ENCODE measurements at regions of chr6 and their contacts with region 1.

Region 1: DNA sequence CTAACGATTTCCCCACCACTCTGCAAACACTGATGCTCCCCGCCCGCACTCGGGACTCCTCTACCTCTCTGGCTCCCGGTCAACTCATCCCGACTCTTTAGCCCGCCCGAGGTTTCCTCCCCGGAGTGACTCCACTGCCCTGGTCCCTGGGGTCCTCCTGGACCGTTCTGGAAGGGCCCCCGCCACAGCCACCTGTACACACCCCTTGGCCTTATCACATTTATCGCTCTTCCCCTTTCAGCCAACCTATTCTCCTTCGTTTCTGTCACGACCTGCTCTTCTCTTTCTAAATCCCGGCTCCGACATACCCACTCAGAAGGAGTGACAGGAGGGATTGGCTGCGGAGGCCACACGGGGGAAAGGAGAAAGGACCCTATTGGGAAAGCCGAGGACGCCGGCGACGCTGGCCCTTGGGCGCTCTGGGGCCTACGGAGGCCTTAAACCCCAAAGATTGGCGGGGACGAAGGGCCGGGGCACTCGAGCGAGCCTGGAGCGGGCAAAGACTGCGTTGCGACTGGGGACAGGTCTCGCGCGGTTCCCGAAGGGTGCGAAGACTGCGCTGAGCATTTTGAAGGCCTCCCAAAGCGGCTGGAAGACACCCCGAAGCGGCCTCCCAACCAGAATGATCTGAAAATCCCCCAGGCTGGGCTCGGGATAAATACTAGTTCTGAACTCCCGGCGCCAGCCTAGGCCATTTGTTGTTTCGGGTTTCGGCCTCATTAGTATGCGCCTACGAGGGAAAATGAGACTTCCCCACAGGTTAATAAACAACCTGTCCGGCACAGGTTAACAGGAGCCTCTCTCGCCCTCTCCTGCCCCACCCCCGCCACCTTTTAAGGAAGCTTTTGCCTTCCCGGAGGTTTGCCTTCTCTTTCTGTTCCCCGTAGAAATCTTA is 9.2 kb downstream of the SIM1 start:
- DNase-seq: no peak
- H3K4me3 ChIP-seq: no peak overlapping the region
- H3K27ac ChIP-seq: no peak overlapping the region
- H3K4me1 ChIP-seq: peaks cover 8% of the 10 kb centered on the region
- H3K27me3 ChIP-seq: peaks cover 76 to 94% of the 10 kb centered on the region in 2 experiments
- CTCF ChIP-seq: no peak
- POLR2A ChIP-seq: no peak

Region 2: DNA sequence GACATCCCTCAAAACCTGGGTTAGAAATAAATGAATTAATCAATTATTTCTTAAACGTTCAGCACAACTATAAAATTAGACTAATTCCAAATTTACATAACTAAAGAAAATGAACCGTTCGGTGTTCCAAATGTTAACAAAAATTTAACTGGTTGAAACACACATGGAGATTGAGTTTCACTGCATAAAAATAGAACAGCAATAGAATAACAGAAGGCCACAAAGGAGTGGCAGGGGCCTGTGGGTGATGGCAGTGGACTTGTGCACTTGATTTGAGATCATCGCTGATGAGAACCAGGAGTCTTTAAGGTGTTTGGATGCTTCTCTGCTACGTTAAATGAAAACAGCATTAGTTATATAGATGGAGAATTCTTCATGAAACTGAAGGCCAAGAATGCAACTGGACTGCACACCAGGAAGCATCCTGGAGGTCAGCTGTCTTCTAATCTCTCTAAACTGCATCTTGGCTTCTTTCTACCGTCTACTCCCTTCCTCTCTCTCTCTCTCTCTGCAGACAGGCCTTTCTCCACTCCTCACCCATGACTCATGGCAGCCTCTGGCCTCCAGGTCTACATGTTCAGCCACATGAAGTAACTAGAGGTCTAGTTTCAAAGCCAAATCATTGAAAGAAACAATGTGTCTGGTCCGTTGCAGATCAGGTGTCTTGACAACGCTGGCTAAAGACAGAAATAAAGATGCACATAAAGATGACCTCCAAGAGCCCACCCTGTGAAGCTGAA is 102.0 kb before region 1 on chr6:
- CTCF ChIA-PET with region 1: interaction called, 5 read pairs
- POLR2A ChIA-PET with region 1: no interaction called
- dilution Hi-C with region 1: no loop called
- intact Hi-C with region 1: loop called (anchors 5 kb)
- DNase-seq: no peak
- H3K4me3 ChIP-seq: no peak overlapping the region
- H3K27ac ChIP-seq: no peak overlapping the region
- H3K4me1 ChIP-seq: peaks cover 20% of the 10 kb centered on the region
- H3K27me3 ChIP-seq: no peaks in the 10 kb centered on the region
- CTCF ChIP-seq: no peak
- POLR2A ChIP-seq: no peak

Region 3: DNA sequence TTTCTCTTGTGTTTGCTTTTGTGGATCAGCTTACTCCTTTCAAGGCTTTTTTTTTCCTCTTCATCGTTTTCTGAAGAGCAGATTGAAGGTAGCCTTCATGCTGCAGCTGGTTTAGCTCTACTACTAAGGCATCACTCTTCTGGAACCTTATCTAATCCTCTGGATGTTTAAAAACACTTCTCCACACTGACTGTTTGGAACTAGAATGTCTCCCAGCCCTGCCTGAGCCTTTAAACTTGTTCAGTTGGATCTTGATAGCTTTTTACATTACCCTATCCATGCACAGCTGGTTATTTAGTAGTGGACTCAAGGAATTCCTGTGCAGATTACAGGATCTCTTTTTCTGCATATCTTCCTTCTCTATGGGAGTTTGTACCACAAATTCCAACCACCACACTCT is 534.6 kb after region 1 on chr6:
- CTCF ChIA-PET with region 1: no interaction called
- POLR2A ChIA-PET with region 1: no interaction called
- dilution Hi-C with region 1: no loop called
- intact Hi-C with region 1: loop called (anchors 5 kb)
- DNase-seq: no peak
- H3K4me3 ChIP-seq: no peak overlapping the region
- H3K27ac ChIP-seq: no peak overlapping the region
- H3K4me1 ChIP-seq: no peaks in the 10 kb centered on the region
- H3K27me3 ChIP-seq: no peaks in the 10 kb centered on the region
- CTCF ChIP-seq: no peak
- POLR2A ChIP-seq: no peak